Naive thymus-derived CD4-positive, alpha-beta T cell (primary cell): ENCODE measurements at regions of chr4 and their contacts with region 1.

Region 1: DNA sequence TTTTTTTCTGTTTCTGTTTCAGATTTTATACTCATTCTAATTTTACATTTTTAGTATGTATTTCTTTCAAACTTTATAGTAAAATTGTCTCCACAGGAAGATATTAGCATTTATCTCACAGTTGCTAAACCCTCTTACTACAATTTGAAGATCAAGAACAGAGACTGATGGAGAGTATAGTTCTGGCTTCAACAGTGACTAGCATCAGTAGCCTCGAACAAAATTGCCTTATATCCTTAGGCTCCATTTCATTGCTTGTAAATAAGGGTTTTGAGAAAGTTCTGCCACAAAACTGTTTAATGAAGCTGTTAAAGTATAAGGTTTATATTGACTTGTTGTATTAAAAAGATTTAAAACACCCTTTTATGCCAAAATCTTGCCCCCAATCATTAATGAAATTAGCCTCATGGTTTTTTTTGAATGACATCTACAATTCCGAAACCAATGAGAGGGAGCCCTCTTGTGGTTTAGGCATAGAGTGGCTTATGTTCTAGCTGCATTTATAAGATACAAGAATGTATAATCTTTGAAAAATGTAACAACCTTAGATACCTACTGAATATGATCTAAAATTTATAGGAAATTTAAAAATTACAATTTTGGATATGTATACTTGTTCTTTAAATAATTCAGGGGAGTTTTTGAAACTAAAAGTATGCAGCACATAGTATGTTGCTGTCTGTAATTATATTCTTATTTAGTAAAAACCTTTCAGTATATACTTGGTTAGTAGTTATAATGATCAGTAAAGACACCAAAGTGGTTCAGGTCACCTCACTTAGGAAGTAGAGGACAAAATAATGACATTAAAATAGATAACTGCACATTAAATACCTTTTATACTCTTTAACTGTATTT is 109.8 kb upstream of the HPGD start:
- DNase-seq: peak in 4 of 9 donors; percentile 16 to 35 (median 27)
- ATAC-seq: peak; percentile 60
- H3K4me3 ChIP-seq: no peak overlapping the region
- H3K4me3 Mint-ChIP-seq: no peak overlapping the region
- H3K27ac ChIP-seq: no peak overlapping the region
- H3K27ac Mint-ChIP-seq: no peak overlapping the region
- H3K4me1 ChIP-seq: no peaks in the 10 kb centered on the region
- H3K4me1 Mint-ChIP-seq: peaks cover 0 to 4% (median 0%) of the 10 kb centered on the region in 7 donors
- H3K27me3 ChIP-seq: no peaks in the 10 kb centered on the region
- H3K27me3 Mint-ChIP-seq: peaks cover 0 to 2% (median 0%) of the 10 kb centered on the region in 5 donors

Region 2: GRCh38 chr4:173698557-173699262 is 933.4 kb before region 1 on chr4:
- CTCF ChIA-PET with region 1: no interaction called
- POLR2A ChIA-PET with region 1: no interaction called
- intact Hi-C with region 1: no loop called
- DNase-seq: no peak
- ATAC-seq: no peak
- H3K4me3 ChIP-seq: no peak overlapping the region
- H3K4me3 Mint-ChIP-seq: no peak overlapping the region
- H3K27ac ChIP-seq: no peak overlapping the region
- H3K27ac Mint-ChIP-seq: no peak overlapping the region
- H3K4me1 ChIP-seq: no peaks in the 10 kb centered on the region
- H3K4me1 Mint-ChIP-seq: no peaks in the 10 kb centered on the region
- H3K27me3 ChIP-seq: no peaks in the 10 kb centered on the region
- H3K27me3 Mint-ChIP-seq: no peaks in the 10 kb centered on the region

Region 3: DNA sequence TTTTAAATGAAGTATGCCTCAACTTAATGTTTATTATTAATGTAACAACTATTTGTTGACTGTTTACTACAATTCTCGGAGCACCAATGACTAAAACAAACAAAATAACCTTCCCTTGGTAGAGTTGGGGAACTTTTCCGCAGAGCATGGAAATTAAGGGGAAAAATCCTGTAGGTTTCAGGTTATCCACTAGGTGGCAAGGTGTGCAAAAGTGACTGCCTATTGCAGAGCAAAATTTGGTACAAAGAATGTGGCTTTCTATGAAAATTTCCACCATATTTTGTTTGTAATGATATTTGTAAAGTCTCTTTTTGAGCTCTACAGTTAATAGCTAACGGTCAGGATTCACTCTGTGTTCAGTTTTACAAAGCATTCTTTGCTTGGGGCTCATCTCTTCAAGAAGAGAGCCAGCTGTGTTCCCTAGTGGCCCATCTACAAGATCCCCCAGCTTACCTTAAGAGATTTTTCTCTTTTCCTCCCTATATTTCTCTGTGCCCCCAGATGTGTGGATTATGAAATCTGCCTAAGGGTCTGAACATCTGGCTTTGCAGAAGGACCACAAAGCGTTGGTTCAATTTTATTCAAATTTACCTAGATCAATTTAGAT is 409.8 kb before region 1 on chr4:
- CTCF ChIA-PET with region 1: no interaction called
- POLR2A ChIA-PET with region 1: no interaction called
- intact Hi-C with region 1: loop called (anchors 2 to 5 kb)
- DNase-seq: peak in 3 of 9 donors; percentile 22 to 33 (median 25)
- ATAC-seq: peak; percentile 64
- H3K4me3 ChIP-seq: no peak overlapping the region
- H3K4me3 Mint-ChIP-seq: no peak overlapping the region
- H3K27ac ChIP-seq: no peak overlapping the region
- H3K27ac Mint-ChIP-seq: no peak overlapping the region
- H3K4me1 ChIP-seq: peaks cover 5% of the 10 kb centered on the region in 2 donors
- H3K4me1 Mint-ChIP-seq: peaks cover 7 to 11% (median 8%) of the 10 kb centered on the region in 7 donors
- H3K27me3 ChIP-seq: peaks cover 0 to 15% of the 10 kb centered on the region in 2 donors
- H3K27me3 Mint-ChIP-seq: peaks cover 43 to 69% (median 63%) of the 10 kb centered on the region in 5 donors

Region 4: GRCh38 chr4:174365018-174365587 is 267.0 kb before region 1 on chr4:
- CTCF ChIA-PET with region 1: no interaction called
- POLR2A ChIA-PET with region 1: no interaction called
- intact Hi-C with region 1: loop called in 1 of 2 experiments (anchors 1 kb)
- DNase-seq: peak in 5 of 9 donors; percentile 2 to 31 (median 15)
- ATAC-seq: no peak
- H3K4me3 ChIP-seq: no peak overlapping the region
- H3K4me3 Mint-ChIP-seq: no peak overlapping the region
- H3K27ac ChIP-seq: no peak overlapping the region
- H3K27ac Mint-ChIP-seq: no peak overlapping the region
- H3K4me1 ChIP-seq: no peaks in the 10 kb centered on the region
- H3K4me1 Mint-ChIP-seq: no peaks in the 10 kb centered on the region
- H3K27me3 ChIP-seq: peaks cover 0 to 2% of the 10 kb centered on the region in 2 donors
- H3K27me3 Mint-ChIP-seq: peaks cover 0 to 16% (median 0%) of the 10 kb centered on the region in 5 donors

Region 5: GRCh38 chr4:174591243-174592021 is 40.7 kb before region 1 on chr4:
- CTCF ChIA-PET with region 1: no interaction called
- POLR2A ChIA-PET with region 1: no interaction called
- intact Hi-C with region 1: loop called in 1 of 2 experiments (anchors 1 kb)
- DNase-seq: peak in 4 of 9 donors; percentile 1 to 19 (median 8)
- ATAC-seq: peak; percentile 90
- H3K4me3 ChIP-seq: no peak overlapping the region
- H3K4me3 Mint-ChIP-seq: peak overlapping the region in 7 of 10 donors; percentile 7 to 60 (median 50)
- H3K27ac ChIP-seq: no peak overlapping the region
- H3K27ac Mint-ChIP-seq: peak overlapping the region in 6 of 9 donors; percentile 39 to 89 (median 64)
- H3K4me1 ChIP-seq: no peaks in the 10 kb centered on the region
- H3K4me1 Mint-ChIP-seq: peaks cover 6 to 15% (median 10%) of the 10 kb centered on the region in 7 donors
- H3K27me3 ChIP-seq: no peaks in the 10 kb centered on the region
- H3K27me3 Mint-ChIP-seq: peaks cover 0 to 2% (median 0%) of the 10 kb centered on the region in 5 donors

Region 6: GRCh38 chr4:174714393-174715211 is 82.5 kb after region 1 on chr4:
- CTCF ChIA-PET with region 1: no interaction called
- POLR2A ChIA-PET with region 1: no interaction called
- intact Hi-C with region 1: loop called in 1 of 2 experiments (anchors 5 kb)
- DNase-seq: peak in 2 of 9 donors; percentile 3 to 4
- ATAC-seq: peak; percentile 57
- H3K4me3 ChIP-seq: no peak overlapping the region
- H3K4me3 Mint-ChIP-seq: no peak overlapping the region
- H3K27ac ChIP-seq: no peak overlapping the region
- H3K27ac Mint-ChIP-seq: no peak overlapping the region
- H3K4me1 ChIP-seq: no peaks in the 10 kb centered on the region
- H3K4me1 Mint-ChIP-seq: no peaks in the 10 kb centered on the region
- H3K27me3 ChIP-seq: no peaks in the 10 kb centered on the region
- H3K27me3 Mint-ChIP-seq: peaks cover 0 to 9% (median 0%) of the 10 kb centered on the region in 5 donors